PC-3 (cell line): ENCODE measurements at regions of chr3 and their contacts with region 1.

Region 1: GRCh38 chr3:23668430-23668904 is 137.3 kb upstream of the UBE2E1 start:
- DNase-seq: peak; percentile 97
- ATAC-seq: peak; percentile 54
- H3K4me3 ChIP-seq: peak overlapping the region; percentile 7; the same call in 1 of the 2 replicates
- H3K27ac ChIP-seq: peak overlapping the region; percentile 96
- H3K4me1 ChIP-seq: peaks cover 74% of the 10 kb centered on the region
- H3K27me3 ChIP-seq: no peaks in the 10 kb centered on the region
- CTCF ChIP-seq: no peak

Region 2: GRCh38 chr3:22377421-22377820 is 1291.0 kb before region 1 on chr3:
- CTCF ChIA-PET with region 1: no interaction called
- POLR2A ChIA-PET with region 1: interaction called, 11 read pairs
- intact Hi-C with region 1: no loop called
- DNase-seq: peak; percentile 83
- ATAC-seq: peak; percentile 98
- H3K4me3 ChIP-seq: no peak overlapping the region
- H3K27ac ChIP-seq: no peak overlapping the region
- H3K4me1 ChIP-seq: peaks cover 16% of the 10 kb centered on the region
- H3K27me3 ChIP-seq: no peaks in the 10 kb centered on the region
- CTCF ChIP-seq: no peak

Region 3: GRCh38 chr3:23324745-23325144 is 343.7 kb before region 1 on chr3:
- CTCF ChIA-PET with region 1: no interaction called
- POLR2A ChIA-PET with region 1: no interaction called
- intact Hi-C with region 1: loop called (anchors 5 kb)
- DNase-seq: peak; percentile 73
- ATAC-seq: peak; percentile 76
- H3K4me3 ChIP-seq: peak overlapping the region; percentile 31
- H3K27ac ChIP-seq: peak overlapping the region; percentile 29
- H3K4me1 ChIP-seq: peaks cover 43% of the 10 kb centered on the region
- H3K27me3 ChIP-seq: no peaks in the 10 kb centered on the region
- CTCF ChIP-seq: no peak

Region 4: GRCh38 chr3:23648326-23648995 is 20.0 kb before region 1 on chr3:
- CTCF ChIA-PET with region 1: interaction called, 3 read pairs
- POLR2A ChIA-PET with region 1: no interaction called
- intact Hi-C with region 1: loop called (anchors 1 kb)
- DNase-seq: peak; percentile 32
- ATAC-seq: no peak
- H3K4me3 ChIP-seq: no peak overlapping the region
- H3K27ac ChIP-seq: no peak overlapping the region
- H3K4me1 ChIP-seq: peaks cover 42% of the 10 kb centered on the region
- H3K27me3 ChIP-seq: no peaks in the 10 kb centered on the region
- CTCF ChIP-seq: peak; percentile 44; the same call in 1 of the 2 replicates

Region 5: GRCh38 chr3:23685484-23686258 is 17.2 kb after region 1 on chr3:
- CTCF ChIA-PET with region 1: no interaction called
- POLR2A ChIA-PET with region 1: no interaction called
- intact Hi-C with region 1: loop called (anchors 2 kb)
- DNase-seq: peak; percentile 100
- ATAC-seq: peak; percentile 93
- H3K4me3 ChIP-seq: no peak overlapping the region
- H3K27ac ChIP-seq: peak overlapping the region; percentile 85
- H3K4me1 ChIP-seq: peaks cover 26% of the 10 kb centered on the region
- H3K27me3 ChIP-seq: no peaks in the 10 kb centered on the region
- CTCF ChIP-seq: no peak

Region 6: GRCh38 chr3:23776352-23776891 is 108.0 kb after region 1 on chr3:
- CTCF ChIA-PET with region 1: no interaction called
- POLR2A ChIA-PET with region 1: no interaction called
- intact Hi-C with region 1: no loop called
- DNase-seq: no peak
- ATAC-seq: no peak
- H3K4me3 ChIP-seq: no peak overlapping the region
- H3K27ac ChIP-seq: no peak overlapping the region
- H3K4me1 ChIP-seq: no peaks in the 10 kb centered on the region
- H3K27me3 ChIP-seq: no peaks in the 10 kb centered on the region
- CTCF ChIP-seq: no peak